ENCODE measurements at regions of chr1 and their contacts with region 1.

Region 1: DNA sequence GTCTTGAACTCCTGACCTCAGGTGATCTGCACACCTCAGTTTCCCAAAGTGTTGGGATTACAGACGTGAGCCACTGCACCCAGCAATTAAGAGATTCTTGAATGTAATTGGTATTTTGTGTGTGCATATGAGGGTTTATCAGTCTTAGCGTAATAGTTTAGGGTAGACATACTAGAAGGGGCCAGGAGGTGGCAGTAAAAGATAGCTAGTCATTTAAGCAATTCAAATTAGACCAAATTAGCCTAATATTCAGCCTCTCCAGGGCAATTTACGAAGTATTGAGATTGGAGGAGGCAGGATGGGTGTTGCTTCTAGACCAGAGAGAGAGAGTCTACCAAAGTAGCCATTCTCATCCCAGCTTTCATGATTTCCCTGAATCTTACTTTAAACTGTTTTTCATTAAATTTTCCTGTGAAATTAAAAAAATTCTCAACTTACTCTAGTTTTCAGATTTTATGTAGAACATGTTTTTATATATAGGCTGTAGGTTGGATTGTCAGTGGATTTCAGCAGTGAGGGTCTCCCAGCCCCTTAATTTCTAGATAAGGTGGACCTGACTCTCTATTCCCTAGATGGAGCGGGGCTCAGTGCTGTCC is 119.7 kb downstream of the HHAT start:
- DNase-seq: peak; percentile 72
- H3K4me3 Mint-ChIP-seq: no peak overlapping the region
- H3K27ac Mint-ChIP-seq: no peak overlapping the region
- H3K4me1 Mint-ChIP-seq: peaks cover 24% of the 10 kb centered on the region
- H3K27me3 Mint-ChIP-seq: peaks cover 14% of the 10 kb centered on the region

Region 2: DNA sequence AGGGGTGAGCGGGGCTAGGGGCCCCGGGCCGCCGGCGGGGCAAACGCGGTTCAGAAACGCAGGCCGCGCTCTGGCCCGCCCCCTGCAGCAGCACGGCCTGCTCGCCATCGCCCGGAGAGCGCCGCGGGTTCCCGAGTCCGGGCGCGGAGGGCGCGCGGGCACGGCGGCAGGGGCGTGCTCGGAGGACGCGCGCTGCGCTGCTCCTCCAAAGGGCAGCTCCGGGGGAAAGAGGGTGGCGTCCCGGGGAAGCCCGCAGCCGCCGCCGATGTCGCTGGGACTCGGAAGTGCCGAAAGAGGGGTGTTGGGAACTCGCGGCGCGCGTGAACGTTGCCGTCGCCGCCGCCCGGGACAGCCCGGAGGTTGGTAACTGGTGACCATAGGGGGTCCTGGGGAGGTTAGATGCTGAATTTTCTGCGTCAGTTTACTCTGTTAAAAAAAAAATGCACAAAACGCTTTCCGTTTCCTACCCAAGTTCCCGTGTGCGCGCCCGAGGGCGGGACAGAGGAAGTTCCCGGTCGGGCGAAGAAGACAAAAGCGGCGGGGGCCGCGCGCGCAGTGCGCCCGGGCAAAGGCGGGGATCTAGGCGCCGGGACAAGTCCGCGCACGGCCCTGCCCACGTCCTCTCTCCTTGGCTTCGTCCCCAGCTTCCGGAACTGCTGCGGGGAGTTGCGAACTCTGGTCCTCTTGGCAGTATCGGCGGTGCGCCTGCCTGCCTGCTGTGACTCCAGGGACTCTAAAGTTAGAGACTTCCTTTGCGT is 119.5 kb before region 1 on chr1 and contains the start of gene HHAT:
- intact Hi-C with region 1: loop called (anchors 1 kb)
- DNase-seq: peak; percentile 91
- H3K4me3 Mint-ChIP-seq: peak within 1 kb of the TSS; percentile 96
- H3K27ac Mint-ChIP-seq: peak within 1 kb of the TSS; percentile 96
- H3K4me1 Mint-ChIP-seq: peaks cover 34% of the 10 kb centered on the region
- H3K27me3 Mint-ChIP-seq: peaks cover 16% of the 10 kb centered on the region
- total RNA-seq, gene HHAT: 0.47 and 0.69 TPM in 2 replicates

Region 3: GRCh38 chr1:210400043-210400840 is 48.2 kb before region 1 on chr1:
- intact Hi-C with region 1: loop called (anchors 2 kb)
- DNase-seq: peak; percentile 83
- H3K4me3 Mint-ChIP-seq: peak overlapping the region; percentile 45
- H3K27ac Mint-ChIP-seq: peak overlapping the region; percentile 78
- H3K4me1 Mint-ChIP-seq: peaks cover 23% of the 10 kb centered on the region
- H3K27me3 Mint-ChIP-seq: peaks cover 15% of the 10 kb centered on the region

Region 4: DNA sequence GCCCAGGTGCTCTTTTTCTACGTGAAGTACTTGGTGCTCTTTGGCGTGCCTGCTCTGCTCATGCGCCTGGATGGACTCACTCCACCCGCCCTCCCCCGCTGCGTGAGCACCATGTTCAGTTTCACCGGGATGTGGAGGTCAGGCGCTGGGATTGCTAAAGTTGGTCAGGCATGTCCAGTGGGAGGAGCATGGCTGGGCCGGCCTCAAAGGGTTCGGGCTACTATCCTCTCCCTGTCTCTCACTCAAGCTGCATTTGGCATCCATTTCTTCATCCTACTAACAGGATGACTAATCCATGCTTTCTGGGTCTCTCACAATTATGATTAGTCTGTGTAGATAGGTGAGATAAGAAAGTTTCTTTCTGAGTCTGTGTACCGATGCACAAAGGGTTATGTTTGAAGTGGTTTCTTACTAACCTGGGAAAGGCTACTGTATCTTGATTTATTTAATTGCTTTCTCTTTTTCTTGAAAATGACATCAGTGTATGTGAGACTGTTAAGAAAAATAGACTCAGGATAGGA is 16.2 kb after region 1 on chr1:
- intact Hi-C with region 1: loop called (anchors 1 kb)
- DNase-seq: no peak
- H3K4me3 Mint-ChIP-seq: no peak overlapping the region
- H3K27ac Mint-ChIP-seq: no peak overlapping the region
- H3K4me1 Mint-ChIP-seq: peaks cover 12% of the 10 kb centered on the region
- H3K27me3 Mint-ChIP-seq: peaks cover 7% of the 10 kb centered on the region

Region 5: GRCh38 chr1:210951279-210951678 is 502.9 kb after region 1 on chr1:
- intact Hi-C with region 1: loop called (anchors 2 kb)
- DNase-seq: no peak
- H3K4me3 Mint-ChIP-seq: no peak overlapping the region
- H3K27ac Mint-ChIP-seq: no peak overlapping the region
- H3K4me1 Mint-ChIP-seq: no peaks in the 10 kb centered on the region
- H3K27me3 Mint-ChIP-seq: peaks cover 2% of the 10 kb centered on the region

Region 6: DNA sequence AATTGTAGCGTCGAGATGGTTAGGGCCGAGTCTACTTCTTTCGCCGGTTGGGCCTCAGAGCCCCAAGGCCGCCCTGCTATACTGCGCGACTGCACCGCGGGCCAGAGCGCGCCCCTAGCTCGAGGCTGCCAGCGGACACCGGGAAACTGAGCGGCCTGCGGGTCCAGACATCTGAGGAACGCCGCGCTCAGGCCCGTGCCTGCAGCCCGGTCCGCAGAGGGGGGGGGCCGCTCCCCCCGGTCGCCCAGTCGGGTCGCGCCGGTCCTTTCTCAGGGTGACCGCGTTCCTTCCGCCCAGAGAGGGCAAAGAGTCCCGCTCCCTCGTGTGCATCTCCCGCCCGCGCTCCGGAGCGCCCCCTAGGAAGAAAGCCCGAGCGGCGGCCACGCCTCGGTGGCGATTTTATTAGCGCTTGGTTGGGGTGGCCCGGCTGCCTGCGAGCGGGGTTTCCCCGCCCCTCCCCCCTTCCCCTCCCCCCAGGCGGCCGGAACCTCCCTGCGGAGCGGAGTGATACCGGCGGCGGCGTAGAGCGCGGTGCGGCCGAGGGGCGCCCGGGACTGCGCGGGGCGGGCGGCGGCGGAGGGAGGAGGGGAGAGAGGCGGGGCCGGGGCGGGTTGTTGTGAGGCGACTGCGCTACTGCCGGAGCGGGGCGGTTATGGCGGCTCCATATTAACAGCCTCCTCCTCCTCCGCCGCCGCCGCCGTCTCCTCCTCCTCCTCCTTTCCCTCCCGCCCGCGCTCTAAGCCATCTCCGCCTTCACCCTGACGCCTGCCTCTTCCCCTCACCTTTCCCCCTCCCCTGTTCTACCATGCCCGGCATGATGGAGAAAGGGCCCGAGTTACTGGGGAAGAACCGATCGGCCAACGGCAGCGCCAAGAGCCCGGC is 810.6 kb after region 1 on chr1 and contains the start of gene RCOR3:
- intact Hi-C with region 1: loop called (anchors 10 kb)
- DNase-seq: peak; percentile 96
- H3K4me3 Mint-ChIP-seq: peak within 1 kb of the TSS; percentile 96
- H3K27ac Mint-ChIP-seq: peak within 1 kb of the TSS; percentile 97
- H3K4me1 Mint-ChIP-seq: peaks cover 13% of the 10 kb centered on the region
- H3K27me3 Mint-ChIP-seq: no peaks in the 10 kb centered on the region
- total RNA-seq, gene RCOR3: 38.0 and 39.8 TPM in 2 replicates

Region 7: DNA sequence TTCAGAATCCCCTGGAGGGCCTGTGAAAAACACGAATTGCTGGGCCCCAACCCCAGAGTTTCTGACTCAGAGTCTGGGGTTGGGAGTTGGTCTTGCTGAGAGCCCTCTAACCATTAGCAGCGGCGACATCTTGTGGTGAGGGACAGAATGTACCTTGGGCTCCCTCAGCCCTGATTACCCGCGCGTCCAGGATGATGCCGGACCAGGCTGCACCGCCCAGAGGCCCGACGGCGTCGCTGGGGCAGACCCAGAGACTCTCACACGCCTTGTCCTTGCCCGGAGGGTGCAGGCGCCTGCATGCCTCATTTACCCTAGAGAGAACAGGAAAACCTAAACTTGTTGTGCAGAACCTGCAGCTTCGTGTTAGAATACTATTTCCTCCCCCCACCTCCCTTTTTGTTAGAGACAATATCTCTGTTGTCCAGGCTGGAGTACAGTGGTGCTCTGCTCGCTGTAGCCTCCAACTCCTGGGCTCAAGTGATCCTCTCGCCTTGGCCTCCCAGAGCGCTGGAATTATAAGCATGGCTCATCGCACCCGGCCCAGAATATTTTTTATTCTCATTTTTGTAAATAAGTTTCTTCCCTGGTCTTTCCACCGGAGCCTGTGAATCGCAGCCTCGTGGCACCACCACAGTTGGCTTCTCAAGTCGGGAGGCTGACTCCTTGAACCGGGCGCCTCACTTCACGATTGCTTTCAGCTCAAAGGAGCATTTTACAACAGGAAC is 1065.8 kb after region 1 on chr1:
- intact Hi-C with region 1: loop called (anchors 10 kb)
- DNase-seq: peak; percentile 91
- H3K4me3 Mint-ChIP-seq: peak overlapping the region; percentile 76
- H3K27ac Mint-ChIP-seq: peak overlapping the region; percentile 69
- H3K4me1 Mint-ChIP-seq: peaks cover 24% of the 10 kb centered on the region
- H3K27me3 Mint-ChIP-seq: peaks cover 12% of the 10 kb centered on the region

Measured in activated CD4-positive, alpha-beta T cell treated with anti-CD3 and anti-CD28 coated beads, Interleukin-2, amount 10 ng/mL, durations not matched to agents 24 days and 14 days (primary cell).